ENCODE measurements at regions of chr2 and their contacts with region 1.

Region 1: GRCh38 chr2:170324640-170325046 is 146.7 kb downstream of the MYO3B start:
- DNase-seq: peak; percentile 53
- H3K4me3 Mint-ChIP-seq: no peak overlapping the region
- H3K27ac Mint-ChIP-seq: no peak overlapping the region
- H3K4me1 Mint-ChIP-seq: no peaks in the 10 kb centered on the region
- H3K27me3 Mint-ChIP-seq: no peaks in the 10 kb centered on the region

Region 2: GRCh38 chr2:170369894-170370293 is 45.3 kb after region 1 on chr2:
- CTCF ChIA-PET with region 1: interaction called, 10 read pairs
- intact Hi-C with region 1: no loop called
- DNase-seq: no peak
- H3K4me3 Mint-ChIP-seq: no peak overlapping the region
- H3K27ac Mint-ChIP-seq: no peak overlapping the region
- H3K4me1 Mint-ChIP-seq: peaks cover 29% of the 10 kb centered on the region
- H3K27me3 Mint-ChIP-seq: peaks cover 25% of the 10 kb centered on the region

Region 3: GRCh38 chr2:170396799-170397459 is 72.3 kb after region 1 on chr2:
- CTCF ChIA-PET with region 1: no interaction called
- intact Hi-C with region 1: loop called (anchors 2 kb)
- DNase-seq: no peak
- H3K4me3 Mint-ChIP-seq: no peak overlapping the region
- H3K27ac Mint-ChIP-seq: no peak overlapping the region
- H3K4me1 Mint-ChIP-seq: peaks cover 4% of the 10 kb centered on the region
- H3K27me3 Mint-ChIP-seq: peaks cover 34% of the 10 kb centered on the region